HepG2 (cell line): ENCODE measurements at regions of chr20 and their contacts with region 1.

Region 1: DNA sequence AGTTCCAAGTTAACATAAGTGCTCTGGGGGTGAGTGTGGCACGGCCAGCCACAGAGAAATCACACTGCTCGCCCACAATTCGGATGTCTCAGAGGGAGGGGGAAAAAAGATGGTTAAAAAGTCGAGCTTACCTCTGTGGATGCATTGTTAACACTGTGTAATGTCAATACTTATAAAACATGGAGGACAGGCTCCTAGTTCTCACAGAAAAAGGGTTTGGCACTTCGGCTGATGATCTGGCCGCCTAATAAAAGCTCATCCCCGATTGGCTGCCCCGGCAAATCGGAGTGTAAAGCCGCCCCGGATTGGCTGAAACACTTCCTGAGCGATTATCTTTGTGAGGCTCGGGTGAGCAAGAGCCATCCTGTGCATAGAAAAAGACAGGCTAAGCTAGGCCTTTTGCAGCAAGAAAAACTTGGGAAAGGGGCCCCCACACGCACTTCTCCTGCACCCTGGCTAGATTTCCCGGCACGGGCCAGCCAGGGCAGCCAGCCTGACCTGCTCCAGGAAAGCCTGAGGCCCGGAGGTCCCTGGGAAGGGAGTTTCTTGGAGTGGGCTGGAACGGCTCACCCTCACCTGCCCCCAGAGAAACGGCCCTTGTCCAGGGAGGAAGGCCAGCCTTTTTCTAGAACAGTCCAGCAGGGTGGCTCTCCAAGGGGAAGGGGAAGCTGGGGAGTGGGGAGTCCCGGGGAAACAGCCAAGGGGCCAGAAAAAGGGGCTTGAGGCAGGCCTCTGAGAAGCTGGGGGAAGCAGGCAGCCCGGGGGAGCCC is at the start of gene ZMYND8:
- DNase-seq: peak; percentile 99
- ATAC-seq: peak; percentile 43
- H3K4me3 ChIP-seq: peak within 1 kb of the TSS; percentile 72 to 81 (median 73)
- H3K27ac ChIP-seq: peak within 1 kb of the TSS; percentile 99
- H3K4me1 ChIP-seq: peaks cover 78% of the 10 kb centered on the region
- H3K27me3 ChIP-seq: no peaks in the 10 kb centered on the region; a peak in 1 of 5 replicates
- CTCF ChIP-seq: no peak
- EP300 ChIP-seq: 0 out of 4 replicates have a peak, but pooled peaks of 1 of the 2 experiments have one; percentile 21
- POLR2A ChIP-seq: peak; percentile 66 to 84
- RAD21 ChIP-seq: no peak; the same call in 1 of the 2 replicates
- total RNA-seq, gene ZMYND8: 53.9 and 71.9 TPM in 2 replicates

Region 2: DNA sequence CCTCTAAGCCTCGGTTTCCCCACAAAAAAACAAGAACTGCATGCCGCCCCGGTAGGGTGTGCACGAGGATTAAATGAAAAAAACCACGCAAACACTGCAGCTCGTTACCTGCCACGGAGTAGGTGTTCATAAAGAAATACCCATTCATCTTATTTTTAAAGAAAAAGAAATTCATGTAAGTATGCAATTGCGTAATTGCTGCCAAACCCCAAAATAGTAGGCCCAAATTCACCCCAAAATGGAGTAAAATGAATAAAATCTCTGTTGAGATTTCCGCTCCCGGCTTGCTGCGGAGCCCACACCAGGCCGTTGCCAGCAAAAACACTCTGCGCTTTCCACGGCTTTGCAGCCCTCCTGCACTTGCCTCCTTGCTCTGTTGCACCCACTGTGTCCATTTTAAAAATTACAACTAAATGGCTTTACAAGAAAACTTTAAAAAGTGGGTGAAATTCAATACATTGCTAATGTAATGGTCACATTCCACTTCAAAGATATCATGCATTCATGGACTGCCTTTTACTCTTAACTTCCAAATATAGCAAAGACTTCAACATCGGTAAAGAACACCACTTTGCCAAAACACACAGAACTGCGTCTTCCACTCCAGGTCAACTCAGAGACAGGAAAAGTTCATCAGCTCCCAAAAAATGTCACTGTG is 125.2 kb before region 1 on chr20:
- CTCF ChIA-PET with region 1: no interaction called
- POLR2A ChIA-PET with region 1: interaction called, 27 read pairs
- in situ Hi-C with region 1: no loop called
- intact Hi-C with region 1: no loop called
- DNase-seq: no peak
- ATAC-seq: no peak
- H3K4me3 ChIP-seq: no peak overlapping the region
- H3K27ac ChIP-seq: no peak overlapping the region
- H3K4me1 ChIP-seq: peaks cover 43% of the 10 kb centered on the region
- H3K27me3 ChIP-seq: no peaks in the 10 kb centered on the region
- CTCF ChIP-seq: no peak
- EP300 ChIP-seq: no peak
- POLR2A ChIP-seq: no peak
- RAD21 ChIP-seq: no peak

Region 3: DNA sequence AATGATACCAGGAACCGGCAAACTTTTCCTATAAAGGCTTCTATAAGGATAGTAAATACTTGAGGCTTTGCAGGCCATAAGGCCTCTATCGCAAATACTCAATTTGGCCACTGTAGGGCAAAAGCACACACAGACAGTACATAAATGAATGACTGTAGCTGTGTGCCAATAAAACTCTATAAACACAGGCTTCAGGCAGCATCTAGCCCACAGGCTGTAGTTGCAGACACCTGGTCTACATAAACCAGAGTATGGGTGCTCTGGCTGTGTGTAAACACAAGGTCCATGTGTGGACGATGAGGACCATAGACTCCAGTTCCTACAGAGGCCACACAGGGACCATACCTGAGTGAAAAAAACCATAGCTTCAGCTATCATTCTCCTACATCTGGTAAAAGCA is 52.4 kb before region 1 on chr20:
- CTCF ChIA-PET with region 1: no interaction called
- POLR2A ChIA-PET with region 1: interaction called, 47 read pairs
- in situ Hi-C with region 1: no loop called
- intact Hi-C with region 1: no loop called
- DNase-seq: no peak
- ATAC-seq: peak; percentile 61
- H3K4me3 ChIP-seq: no peak overlapping the region
- H3K27ac ChIP-seq: no peak overlapping the region
- H3K4me1 ChIP-seq: peaks cover 28% of the 10 kb centered on the region
- H3K27me3 ChIP-seq: no peaks in the 10 kb centered on the region
- CTCF ChIP-seq: no peak
- EP300 ChIP-seq: no peak
- POLR2A ChIP-seq: 0 out of 4 replicates have a peak, but pooled peaks of 1 of the 2 experiments have one; percentile 22
- RAD21 ChIP-seq: no peak

Region 4: GRCh38 chr20:47343007-47343472 is 13.7 kb before region 1 on chr20:
- CTCF ChIA-PET with region 1: no interaction called
- POLR2A ChIA-PET with region 1: interaction called, 624 read pairs
- in situ Hi-C with region 1: no loop called
- intact Hi-C with region 1: loop called (anchors 2 kb)
- DNase-seq: no peak
- ATAC-seq: peak; percentile 15; the same call in 2 of the 3 replicates
- H3K4me3 ChIP-seq: no peak overlapping the region
- H3K27ac ChIP-seq: peak overlapping the region; percentile 15
- H3K4me1 ChIP-seq: peaks cover 98% of the 10 kb centered on the region
- H3K27me3 ChIP-seq: no peaks in the 10 kb centered on the region
- CTCF ChIP-seq: no peak
- EP300 ChIP-seq: 0 out of 4 replicates have a peak, but pooled peaks of 1 of the 2 experiments have one; percentile 16
- POLR2A ChIP-seq: no peak
- RAD21 ChIP-seq: no peak

Region 5: GRCh38 chr20:47392015-47392720 is 35.5 kb after region 1 on chr20:
- CTCF ChIA-PET with region 1: no interaction called
- POLR2A ChIA-PET with region 1: interaction called, 28 read pairs
- in situ Hi-C with region 1: no loop called
- intact Hi-C with region 1: no loop called
- DNase-seq: peak; percentile 71
- ATAC-seq: peak; percentile 53
- H3K4me3 ChIP-seq: no peak overlapping the region
- H3K27ac ChIP-seq: no peak overlapping the region
- H3K4me1 ChIP-seq: peaks cover 38% of the 10 kb centered on the region
- H3K27me3 ChIP-seq: no peaks in the 10 kb centered on the region
- CTCF ChIP-seq: no peak
- EP300 ChIP-seq: peak in 1 of 2 experiments; percentile 18; a peak in 1 of 4 replicates
- POLR2A ChIP-seq: no peak
- RAD21 ChIP-seq: no peak

Region 6: GRCh38 chr20:47487175-47487917 is 130.6 kb after region 1 on chr20:
- CTCF ChIA-PET with region 1: no interaction called
- POLR2A ChIA-PET with region 1: no interaction called
- in situ Hi-C with region 1: no loop called
- intact Hi-C with region 1: no loop called
- DNase-seq: no peak
- ATAC-seq: no peak
- H3K4me3 ChIP-seq: no peak overlapping the region
- H3K27ac ChIP-seq: no peak overlapping the region
- H3K4me1 ChIP-seq: peaks cover 19% of the 10 kb centered on the region
- H3K27me3 ChIP-seq: no peaks in the 10 kb centered on the region
- CTCF ChIP-seq: no peak
- EP300 ChIP-seq: no peak
- POLR2A ChIP-seq: no peak
- RAD21 ChIP-seq: no peak

Region 7: GRCh38 chr20:47501483-47502270 is 145.0 kb after region 1 on chr20 and contains the start of gene NCOA3:
- CTCF ChIA-PET with region 1: no interaction called
- POLR2A ChIA-PET with region 1: interaction called, 51 read pairs
- in situ Hi-C with region 1: no loop called
- intact Hi-C with region 1: no loop called
- DNase-seq: peak; percentile 97
- ATAC-seq: peak; percentile 97
- H3K4me3 ChIP-seq: peak within 1 kb of the TSS; percentile 100
- H3K27ac ChIP-seq: peak within 1 kb of the TSS; percentile 82
- H3K4me1 ChIP-seq: peaks cover 57% of the 10 kb centered on the region
- H3K27me3 ChIP-seq: no peaks in the 10 kb centered on the region; a peak in 1 of 5 replicates
- CTCF ChIP-seq: peak; percentile 84
- EP300 ChIP-seq: peak; percentile 63 to 64; a peak in 2 of 4 replicates
- POLR2A ChIP-seq: peak; percentile 90 to 96
- RAD21 ChIP-seq: peak; percentile 77
- total RNA-seq, gene NCOA3: 56.8 and 76.2 TPM in 2 replicates